Psoas muscle (tissue), 8 donors: ENCODE measurements at regions of chr5 and their contacts with region 1.

Region 1: DNA sequence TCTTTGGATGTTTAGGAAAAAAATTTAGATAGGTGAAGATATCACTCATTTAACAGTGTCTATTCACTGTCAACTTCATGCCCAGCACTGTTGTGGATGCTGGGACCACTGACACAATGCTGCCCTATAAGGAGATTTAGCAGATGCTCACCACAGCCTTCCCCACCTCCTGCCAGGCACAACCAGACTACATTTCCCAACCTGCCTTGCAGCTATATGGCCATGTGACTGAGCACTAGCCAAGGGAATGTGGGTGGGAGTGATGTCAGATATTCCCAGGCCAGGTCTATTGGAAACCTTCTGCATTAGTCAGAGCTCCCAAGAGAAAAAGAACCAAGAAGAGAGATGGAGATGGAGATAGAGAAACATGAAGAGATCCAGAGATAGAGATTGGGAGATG is 302.6 kb upstream of the TAS2R1 start:
- DNase-seq: no peak
- ATAC-seq: no peak
- H3K4me3 ChIP-seq: no peak overlapping the region
- H3K27ac ChIP-seq: no peak overlapping the region
- H3K4me1 ChIP-seq: no peaks in the 10 kb centered on the region
- H3K27me3 ChIP-seq: peaks cover 0 to 2% (median 0%) of the 10 kb centered on the region in 3 donors
- CTCF ChIP-seq: no peak

Region 2: DNA sequence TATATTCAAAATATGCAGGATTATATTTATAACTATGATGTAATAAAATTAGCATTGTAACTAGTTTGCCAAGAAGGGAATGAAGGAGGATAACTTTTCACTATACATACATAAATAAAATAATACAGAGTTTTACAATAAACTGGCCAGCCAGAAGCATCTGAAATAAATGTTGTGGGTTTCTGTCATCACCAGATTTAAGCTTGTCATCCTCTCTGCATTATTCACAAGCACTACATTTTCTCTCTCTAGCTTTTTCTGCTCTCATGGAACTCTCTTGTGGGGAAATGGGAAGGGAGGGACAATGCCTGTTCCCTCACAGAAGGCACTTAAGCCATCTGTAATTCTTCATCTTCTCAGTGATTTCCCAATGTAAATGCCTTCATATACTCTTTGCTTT is 1013.7 kb before region 1 on chr5:
- intact Hi-C with region 1: loop called in 1 of 2 experiments (anchors 5 kb)
- DNase-seq: no peak
- ATAC-seq: no peak
- H3K4me3 ChIP-seq: no peak overlapping the region
- H3K27ac ChIP-seq: no peak overlapping the region
- H3K4me1 ChIP-seq: no peaks in the 10 kb centered on the region
- H3K27me3 ChIP-seq: no peaks in the 10 kb centered on the region
- CTCF ChIP-seq: no peak